ENCODE measurements at regions of chr19 and their contacts with region 1.

Region 1: DNA sequence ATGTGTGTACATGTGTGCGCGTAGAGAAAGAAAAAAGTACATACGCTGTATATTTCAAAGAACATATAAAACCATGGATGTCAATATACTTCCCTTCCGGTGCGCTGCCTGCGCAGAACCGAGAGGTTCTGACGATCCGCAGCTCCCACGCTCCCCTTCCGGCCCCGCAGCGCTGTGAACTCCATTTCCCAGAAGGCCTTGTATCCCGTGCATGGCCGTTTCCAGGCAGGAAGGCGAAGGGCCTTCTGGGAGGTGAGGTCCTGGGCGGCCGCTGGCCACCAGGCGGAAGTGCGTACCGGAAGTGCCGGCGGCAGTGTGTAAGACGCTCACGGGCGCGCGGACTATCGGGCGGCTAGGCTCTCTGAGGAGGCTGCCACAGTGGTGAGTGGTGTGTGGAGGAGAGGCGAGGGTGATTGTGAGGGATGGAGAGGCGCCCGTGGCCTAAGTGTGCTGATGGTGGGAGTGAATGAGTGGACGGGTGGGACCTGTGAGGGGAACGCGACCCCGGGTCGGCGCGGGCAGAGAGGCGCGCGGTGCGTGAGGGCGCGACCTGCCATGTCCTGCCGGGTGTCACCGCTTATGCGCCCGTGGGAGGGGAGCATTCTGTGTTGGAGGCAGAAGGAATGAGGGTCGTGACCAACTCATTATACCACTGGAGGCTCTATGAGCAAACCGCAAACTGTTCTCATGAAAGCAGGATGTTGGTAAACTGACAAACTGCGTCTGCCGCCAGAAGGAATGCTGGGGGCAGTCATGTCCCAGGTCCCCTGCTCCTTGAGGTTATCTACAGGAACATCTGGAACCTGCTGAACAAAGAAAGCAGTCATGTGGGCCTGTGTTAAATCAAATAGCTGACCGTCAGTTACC is at the start of gene ERVK3-1:
- DNase-seq: peak; percentile 95 to 99
- H3K4me3 ChIP-seq: peak within 1 kb of the TSS; percentile 69
- CTCF ChIP-seq: no peak
- POLR2A ChIP-seq: peak in 1 of 2 donors; percentile 81
- total RNA-seq, gene ERVK3-1: 23.3 to 50.1 (median 33.4) TPM

Region 2: GRCh38 chr19:58091251-58091995 is 213.9 kb before region 1 on chr19:
- intact Hi-C with region 1: loop called (anchors 5 kb)
- DNase-seq: no peak
- H3K4me3 ChIP-seq: no peak overlapping the region
- CTCF ChIP-seq: no peak
- POLR2A ChIP-seq: no peak

Region 3: DNA sequence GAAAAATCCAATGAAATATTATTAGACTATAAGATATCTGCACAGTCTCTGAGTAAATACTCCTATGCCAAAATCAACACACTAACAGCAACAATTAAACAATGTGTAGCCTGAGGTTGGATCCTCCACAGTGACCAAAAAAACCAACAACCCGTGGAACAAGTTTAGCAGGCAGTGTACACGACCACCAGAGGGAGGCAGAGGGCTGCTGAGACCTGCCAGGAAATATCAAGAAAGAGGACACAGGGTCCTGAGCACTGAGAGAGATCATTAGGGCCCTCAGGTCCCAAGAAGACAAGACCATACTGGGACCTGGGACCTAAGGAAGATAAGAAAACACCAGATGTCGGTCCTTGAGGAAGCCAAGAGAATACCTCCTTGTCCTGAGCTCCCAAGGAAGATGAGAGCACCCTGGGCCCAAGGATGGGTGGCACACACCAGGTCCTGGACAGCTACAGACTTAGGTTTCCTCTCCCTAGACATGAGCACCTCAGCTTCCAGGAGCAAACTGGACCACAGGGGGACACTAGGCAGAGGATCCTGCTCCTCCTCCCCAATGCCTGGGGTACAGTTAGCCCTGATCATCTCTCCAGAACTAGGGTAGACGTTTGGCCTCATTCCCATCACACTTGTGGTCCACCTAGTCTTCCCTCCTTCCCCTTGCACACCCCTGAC is 123.3 kb before region 1 on chr19:
- intact Hi-C with region 1: no loop called
- DNase-seq: peak in 1 of 2 donors; percentile 29
- H3K4me3 ChIP-seq: peak overlapping the region; percentile 63
- CTCF ChIP-seq: no peak
- POLR2A ChIP-seq: no peak

Measured in lower leg skin (tissue), 4 donors.